Activated CD8-positive, alpha-beta T cell treated with anti-CD3 and anti-CD28 coated beads, Interleukin-2, amount 10 ng/mL, durations not matched to agents 7 days and 5 days (primary cell): ENCODE measurements at regions of chr16 and their contacts with region 1.

Region 1: DNA sequence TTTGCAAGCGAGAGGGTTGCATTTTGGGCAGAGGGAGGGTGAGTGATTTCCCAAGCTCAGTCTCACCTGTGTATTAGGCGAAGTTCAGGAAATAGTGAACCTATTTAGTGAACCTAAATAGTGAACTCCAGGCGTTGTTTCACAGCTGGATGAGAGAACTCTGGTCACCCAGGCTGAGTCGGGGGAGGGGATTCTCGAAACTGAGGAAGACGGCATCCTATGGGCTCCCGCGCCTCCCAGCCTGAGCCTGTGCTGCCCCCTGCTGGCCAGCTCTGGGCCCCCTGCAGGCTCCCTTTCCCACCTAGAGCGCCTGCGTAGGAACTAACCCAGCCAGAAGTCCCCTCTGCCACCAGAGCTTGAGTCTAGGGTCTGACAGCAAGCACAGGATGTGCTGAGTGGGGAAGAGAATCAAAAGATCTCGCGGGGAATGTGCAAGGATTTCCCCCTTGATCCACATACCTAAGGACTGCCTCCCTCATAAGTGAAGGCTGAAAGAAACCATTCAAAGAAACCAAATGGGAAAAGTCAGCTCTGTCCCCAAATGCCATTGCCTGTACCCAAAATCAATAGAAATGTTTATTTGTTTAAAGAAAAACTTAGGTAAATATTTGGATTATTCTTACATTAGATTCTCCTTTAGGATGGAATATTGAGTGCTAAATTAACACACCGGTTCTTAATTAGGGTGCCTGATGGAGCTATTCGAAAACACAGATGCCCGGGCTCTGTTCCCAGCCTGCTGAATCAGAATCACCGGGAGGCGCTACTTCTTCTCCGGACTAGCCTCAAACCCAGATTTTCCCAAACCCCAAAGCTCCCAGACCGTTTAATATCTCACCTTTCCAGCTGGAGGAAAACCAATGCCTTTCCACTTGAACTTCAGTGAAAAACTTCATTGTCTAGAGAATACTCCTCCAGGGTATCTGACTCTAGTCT is 14.8 kb upstream of the MARVELD3 start:
- DNase-seq: peak; percentile 83
- ATAC-seq: peak; percentile 96
- H3K4me3 Mint-ChIP-seq: no peak overlapping the region
- H3K27ac Mint-ChIP-seq: no peak overlapping the region
- H3K4me1 Mint-ChIP-seq: peaks cover 8% of the 10 kb centered on the region
- H3K27me3 Mint-ChIP-seq: peaks cover 34% of the 10 kb centered on the region

Region 2: DNA sequence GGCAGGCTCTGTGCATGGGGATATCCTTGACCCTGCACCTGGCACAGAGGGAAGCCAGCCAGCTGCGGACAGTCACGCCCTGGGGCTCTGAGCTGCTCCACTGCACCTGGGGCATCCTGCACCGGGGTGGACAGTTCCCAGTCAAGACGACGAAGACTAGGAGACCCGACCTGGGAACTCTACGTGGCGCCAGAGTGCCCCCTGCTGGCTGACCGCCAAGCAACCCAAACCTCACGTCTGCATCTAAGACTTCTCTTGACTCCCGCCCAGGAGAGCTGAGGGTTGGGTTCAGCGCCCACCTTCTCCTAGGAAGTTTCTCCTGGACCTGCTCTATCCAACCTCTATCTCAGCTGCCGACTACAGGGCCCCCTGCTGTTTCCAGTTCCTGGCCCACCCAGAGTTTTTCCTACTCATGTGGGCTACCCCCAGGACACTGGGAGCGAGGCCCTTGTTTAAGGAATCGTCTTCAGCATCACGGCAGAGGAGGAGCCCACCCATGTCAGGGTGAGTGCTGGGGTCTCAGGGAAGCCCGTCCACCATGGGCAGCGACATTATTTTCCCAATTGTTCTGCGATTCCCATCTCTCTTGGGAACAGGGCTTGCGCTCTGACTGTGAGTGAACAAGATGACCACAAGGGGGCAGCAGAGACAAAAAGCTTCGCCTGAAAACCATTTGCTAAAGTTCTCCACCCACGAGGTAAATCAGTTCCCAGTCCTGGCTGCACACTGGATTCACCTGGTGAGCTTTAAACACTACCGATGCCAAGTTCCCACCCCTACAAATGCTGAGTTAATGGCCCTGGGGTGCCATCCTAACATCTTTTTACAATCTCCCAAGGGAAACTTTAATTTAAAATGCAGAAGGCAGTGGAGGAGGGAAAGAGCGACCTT is 198.7 kb before region 1 on chr16:
- CTCF ChIA-PET with region 1: interaction called, 33 read pairs
- POLR2A ChIA-PET with region 1: no interaction called
- DNase-seq: peak; percentile 77
- ATAC-seq: peak; percentile 80
- H3K4me3 Mint-ChIP-seq: no peak overlapping the region
- H3K27ac Mint-ChIP-seq: no peak overlapping the region
- H3K4me1 Mint-ChIP-seq: peaks cover 13% of the 10 kb centered on the region
- H3K27me3 Mint-ChIP-seq: peaks cover 27% of the 10 kb centered on the region

Region 3: DNA sequence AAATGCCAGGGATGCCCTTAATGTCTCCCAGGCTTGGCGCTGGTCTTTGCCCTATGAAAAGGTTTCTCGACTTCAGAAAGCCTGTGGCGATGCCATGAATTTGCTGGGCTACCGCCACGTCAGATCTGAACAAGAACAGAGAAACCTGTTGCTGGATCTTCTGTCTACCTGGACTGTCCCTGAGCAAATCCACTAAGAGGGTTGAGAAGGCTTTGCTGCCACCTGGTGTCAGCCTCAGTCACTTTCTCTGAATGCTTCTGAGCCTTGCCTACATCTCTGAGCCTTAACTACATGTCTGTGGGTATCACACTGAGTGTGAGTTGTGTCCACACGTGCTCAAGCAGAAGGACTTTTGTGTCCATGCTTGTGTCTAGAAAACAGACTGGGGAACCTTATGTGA is 73.6 kb before region 1 on chr16:
- CTCF ChIA-PET with region 1: interaction called, 16 read pairs
- POLR2A ChIA-PET with region 1: no interaction called
- DNase-seq: peak; percentile 58
- ATAC-seq: peak; percentile 72
- H3K4me3 Mint-ChIP-seq: no peak overlapping the region
- H3K27ac Mint-ChIP-seq: no peak overlapping the region
- H3K4me1 Mint-ChIP-seq: no peaks in the 10 kb centered on the region
- H3K27me3 Mint-ChIP-seq: peaks cover 1% of the 10 kb centered on the region

Region 4: GRCh38 chr16:71564155-71564967 is 46.8 kb before region 1 on chr16:
- CTCF ChIA-PET with region 1: interaction called, 108 read pairs
- POLR2A ChIA-PET with region 1: interaction called, 9 read pairs
- DNase-seq: no peak
- ATAC-seq: no peak
- H3K4me3 Mint-ChIP-seq: peak overlapping the region; percentile 91
- H3K27ac Mint-ChIP-seq: peak overlapping the region; percentile 97
- H3K4me1 Mint-ChIP-seq: peaks cover 19% of the 10 kb centered on the region
- H3K27me3 Mint-ChIP-seq: peaks cover 12% of the 10 kb centered on the region

Region 5: DNA sequence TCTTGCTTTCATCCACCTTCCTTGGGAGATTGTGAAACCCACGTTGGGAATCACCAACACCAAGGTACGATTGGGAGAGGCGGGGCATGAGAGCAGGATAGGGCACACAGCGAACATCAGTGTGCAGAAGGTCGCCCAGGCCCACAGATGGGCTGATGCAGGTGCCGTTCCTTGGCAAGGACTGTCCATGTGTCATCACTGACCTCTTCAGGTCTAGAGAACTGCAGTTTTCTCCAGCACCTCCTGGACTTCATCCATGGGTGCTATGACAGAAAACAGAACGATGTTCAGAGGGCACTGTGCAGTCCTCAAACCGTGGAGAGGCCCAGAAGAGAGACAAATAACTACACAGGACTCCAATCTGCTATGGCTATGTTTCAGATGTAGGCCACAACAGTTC is 10.4 kb before region 1 on chr16:
- CTCF ChIA-PET with region 1: interaction called, 10 read pairs
- POLR2A ChIA-PET with region 1: no interaction called
- DNase-seq: no peak
- ATAC-seq: no peak
- H3K4me3 Mint-ChIP-seq: no peak overlapping the region
- H3K27ac Mint-ChIP-seq: no peak overlapping the region
- H3K4me1 Mint-ChIP-seq: no peaks in the 10 kb centered on the region
- H3K27me3 Mint-ChIP-seq: peaks cover 25% of the 10 kb centered on the region

Region 6: GRCh38 chr16:71628810-71629209 is 17.6 kb after region 1 on chr16:
- CTCF ChIA-PET with region 1: interaction called, 19 read pairs
- POLR2A ChIA-PET with region 1: no interaction called
- DNase-seq: no peak
- ATAC-seq: no peak
- H3K4me3 Mint-ChIP-seq: no peak overlapping the region
- H3K27ac Mint-ChIP-seq: no peak overlapping the region
- H3K4me1 Mint-ChIP-seq: no peaks in the 10 kb centered on the region
- H3K27me3 Mint-ChIP-seq: peaks cover 22% of the 10 kb centered on the region

Region 7: DNA sequence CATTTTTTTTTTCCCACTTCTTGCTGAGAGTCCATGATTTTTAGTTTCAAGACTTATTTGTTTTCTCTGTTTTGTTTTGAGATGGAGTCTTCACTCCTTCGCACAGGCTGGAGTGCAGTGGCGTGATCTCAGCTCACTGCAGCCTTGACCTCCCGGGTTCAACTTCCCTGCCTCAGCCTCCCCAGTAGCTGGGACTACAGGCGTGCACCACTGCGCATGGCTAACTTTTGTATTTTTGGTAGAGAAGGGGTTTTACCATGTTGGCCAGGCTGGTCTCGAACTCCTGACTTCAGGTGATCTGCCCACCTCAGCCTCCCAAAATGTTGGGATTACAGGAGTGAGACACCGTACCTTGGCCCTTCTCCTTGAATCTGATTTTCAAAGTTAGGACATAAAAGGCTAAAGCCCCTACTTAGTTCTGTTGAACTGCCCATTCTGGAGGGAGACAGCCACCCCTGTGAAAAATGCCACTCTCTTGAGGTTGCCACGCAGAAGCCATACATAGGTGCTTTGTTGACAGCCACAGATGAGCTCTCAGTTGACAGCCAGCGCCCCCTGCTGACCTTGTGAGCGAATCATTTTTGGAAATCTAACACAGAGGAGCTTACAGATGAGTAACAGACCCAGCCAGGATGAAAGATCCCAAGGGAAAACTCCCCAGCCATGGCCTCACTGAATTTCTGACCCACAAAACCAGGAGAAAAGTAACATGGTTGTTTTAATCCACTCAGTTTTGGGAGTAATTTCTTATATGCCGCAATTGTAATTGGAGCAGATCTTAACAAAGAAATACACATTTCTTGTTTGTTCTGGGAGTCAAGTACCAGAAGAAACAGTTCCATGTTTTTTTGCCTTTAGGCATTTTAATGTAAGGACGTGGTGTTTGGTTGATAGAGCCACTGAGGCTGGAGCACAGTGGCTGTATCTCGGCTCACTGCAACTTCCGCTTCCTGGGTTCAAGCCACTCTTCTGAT is 350.1 kb after region 1 on chr16:
- CTCF ChIA-PET with region 1: interaction called, 14 read pairs
- POLR2A ChIA-PET with region 1: no interaction called
- DNase-seq: peak; percentile 89
- ATAC-seq: peak; percentile 95
- H3K4me3 Mint-ChIP-seq: no peak overlapping the region
- H3K27ac Mint-ChIP-seq: no peak overlapping the region
- H3K4me1 Mint-ChIP-seq: peaks cover 13% of the 10 kb centered on the region
- H3K27me3 Mint-ChIP-seq: no peaks in the 10 kb centered on the region